Sciatic nerve (tissue), 2 donors: ENCODE measurements at regions of chr7 and their contacts with region 1.

Region 1: GRCh38 chr7:2829040-2829439 is 15.1 kb downstream of the GNA12 start:
- DNase-seq: no peak
- ATAC-seq: no peak

Region 2: GRCh38 chr7:2802504-2803341 is 26.3 kb before region 1 on chr7:
- intact Hi-C with region 1: loop called (anchors 2 kb)
- DNase-seq: no peak
- ATAC-seq: no peak